Cardiac septum (tissue), 1 donor: ENCODE measurements at regions of chr13 and their contacts with region 1.

Region 1: DNA sequence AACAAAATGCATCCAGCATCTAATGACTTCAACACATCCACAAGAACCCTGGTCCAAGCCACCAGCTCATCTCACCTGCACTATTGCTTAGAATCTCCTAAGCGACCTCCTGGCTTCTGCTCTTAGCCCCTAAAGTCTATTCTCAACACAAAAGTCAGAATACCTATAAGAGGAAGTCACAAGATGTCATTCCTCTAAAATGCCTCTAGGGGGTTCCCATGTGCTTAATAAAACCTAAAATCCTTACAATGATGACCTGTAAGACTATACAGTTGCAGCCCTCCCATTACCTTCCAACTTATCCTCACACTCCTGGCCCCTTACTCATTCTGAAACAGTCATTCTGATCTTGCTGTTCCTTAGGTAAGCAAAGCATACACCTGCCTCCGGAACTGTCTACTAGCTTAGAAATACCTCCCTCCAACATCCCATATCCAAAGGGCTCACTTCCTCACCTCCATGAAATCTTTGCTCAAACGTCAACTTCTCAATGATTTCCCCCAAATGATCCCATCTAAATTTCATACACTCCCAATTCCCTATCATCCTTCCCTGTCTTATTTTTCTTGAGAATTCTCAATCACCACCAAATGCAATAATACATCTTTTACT is 10.0 kb downstream of the ATP7B start:
- DNase-seq: no peak

Region 2: GRCh38 chr13:50780201-50781015 is 1220.8 kb before region 1 on chr13:
- intact Hi-C with region 1: no loop called
- DNase-seq: no peak

Region 3: GRCh38 chr13:52061587-52061986 is 60.4 kb after region 1 on chr13:
- intact Hi-C with region 1: loop called (anchors 10 kb)
- DNase-seq: no peak